ENCODE measurements at regions of chrX and their contacts with region 1.

Region 1: GRCh38 chrX:152958524-152959465 is 35.1 kb downstream of the PNMA5 start:
- DNase-seq: peak; percentile 90 to 93 (median 93)
- H3K4me3 ChIP-seq: peak overlapping the region in 1 of 2 donors; percentile 28
- H3K4me3 Mint-ChIP-seq: peak overlapping the region; percentile 39 to 86 (median 77)
- H3K27ac ChIP-seq: peak overlapping the region; percentile 31
- H3K27ac Mint-ChIP-seq: peak overlapping the region; percentile 84 to 96 (median 94)
- H3K4me1 ChIP-seq: peaks cover 7% of the 10 kb centered on the region
- H3K4me1 Mint-ChIP-seq: peaks cover 3 to 16% (median 7%) of the 10 kb centered on the region in 4 donors
- H3K27me3 ChIP-seq: no peaks in the 10 kb centered on the region
- H3K27me3 Mint-ChIP-seq: no peaks in the 10 kb centered on the region

Region 2: GRCh38 chrX:153032397-153033118 is 73.8 kb after region 1 on chrX:
- CTCF ChIA-PET with region 1: interaction called, 6 read pairs
- POLR2A ChIA-PET with region 1: interaction called, 6 read pairs
- intact Hi-C with region 1: loop called (anchors 2 kb)
- DNase-seq: peak; percentile 38 to 62 (median 57)
- H3K4me3 ChIP-seq: peak overlapping the region in 1 of 2 donors; percentile 36
- H3K4me3 Mint-ChIP-seq: peak overlapping the region; percentile 83 to 91 (median 86)
- H3K27ac ChIP-seq: peak overlapping the region; percentile 52
- H3K27ac Mint-ChIP-seq: peak overlapping the region; percentile 79 to 94 (median 90)
- H3K4me1 ChIP-seq: peaks cover 9% of the 10 kb centered on the region
- H3K4me1 Mint-ChIP-seq: peaks cover 0 to 24% (median 8%) of the 10 kb centered on the region in 4 donors
- H3K27me3 ChIP-seq: no peaks in the 10 kb centered on the region
- H3K27me3 Mint-ChIP-seq: no peaks in the 10 kb centered on the region

Region 3: DNA sequence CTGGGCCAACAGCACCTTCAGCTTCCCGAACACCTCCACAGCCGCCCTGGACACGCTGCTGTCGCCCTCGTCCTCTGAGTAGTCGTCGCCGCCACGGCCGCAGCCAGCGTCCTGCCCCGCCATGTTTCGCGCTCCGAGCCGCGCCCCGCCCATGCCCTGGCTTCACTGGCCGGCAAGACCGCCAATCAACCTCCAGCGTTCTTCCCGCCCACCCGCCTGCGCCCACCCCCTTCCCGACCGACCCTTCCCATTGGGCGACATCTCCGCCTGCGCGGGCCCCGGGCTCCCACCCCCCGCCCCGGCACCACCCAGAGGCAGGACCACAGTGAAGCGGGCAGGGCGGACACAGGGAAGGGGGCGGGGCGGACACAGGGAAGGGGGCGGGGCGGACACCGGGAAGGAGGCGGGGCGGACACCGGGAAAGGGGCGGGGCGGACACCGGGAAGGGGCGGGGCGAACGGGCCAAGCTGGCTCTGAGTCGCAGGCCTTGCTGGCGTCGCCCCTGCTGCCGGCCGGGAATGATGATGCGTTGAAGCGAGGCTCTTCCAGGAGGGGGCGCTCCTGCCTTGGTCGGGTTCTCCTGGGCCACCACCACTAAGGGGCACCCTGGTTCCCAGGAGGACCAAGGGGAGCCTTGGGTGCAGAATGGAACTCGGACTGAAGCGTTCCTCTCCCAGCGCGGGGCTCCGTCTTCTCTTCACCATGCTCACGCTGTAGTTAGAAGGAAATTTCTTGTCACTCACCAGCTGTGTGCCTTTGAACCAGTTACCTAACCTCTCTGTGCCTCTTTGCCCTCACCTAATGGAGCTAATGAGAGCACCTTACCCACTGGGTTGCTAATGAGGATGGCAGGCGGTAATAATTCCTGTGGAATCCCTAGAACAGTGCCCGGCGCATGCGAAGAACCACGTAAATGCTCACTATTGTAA is 511.9 kb after region 1 on chrX and contains the start of gene HAUS7:
- CTCF ChIA-PET with region 1: interaction called, 3 read pairs
- POLR2A ChIA-PET with region 1: no interaction called
- intact Hi-C with region 1: loop called (anchors 1 kb)
- DNase-seq: peak; percentile 84 to 89 (median 87)
- H3K4me3 ChIP-seq: peak within 1 kb of the TSS; percentile 42 to 69
- H3K4me3 Mint-ChIP-seq: peak within 1 kb of the TSS; percentile 80 to 87 (median 83)
- H3K27ac ChIP-seq: peak within 1 kb of the TSS; percentile 59
- H3K27ac Mint-ChIP-seq: peak within 1 kb of the TSS; percentile 59 to 89 (median 82)
- H3K4me1 ChIP-seq: peaks cover 31% of the 10 kb centered on the region
- H3K4me1 Mint-ChIP-seq: peaks cover 6 to 21% (median 15%) of the 10 kb centered on the region in 4 donors
- H3K27me3 ChIP-seq: no peaks in the 10 kb centered on the region
- H3K27me3 Mint-ChIP-seq: no peaks in the 10 kb centered on the region
- total RNA-seq, gene HAUS7: 29.8 to 33.8 TPM